Right ventricle myocardium inferior (tissue), 1 donor: ENCODE measurements at regions of chr5 and their contacts with region 1.

Region 1: DNA sequence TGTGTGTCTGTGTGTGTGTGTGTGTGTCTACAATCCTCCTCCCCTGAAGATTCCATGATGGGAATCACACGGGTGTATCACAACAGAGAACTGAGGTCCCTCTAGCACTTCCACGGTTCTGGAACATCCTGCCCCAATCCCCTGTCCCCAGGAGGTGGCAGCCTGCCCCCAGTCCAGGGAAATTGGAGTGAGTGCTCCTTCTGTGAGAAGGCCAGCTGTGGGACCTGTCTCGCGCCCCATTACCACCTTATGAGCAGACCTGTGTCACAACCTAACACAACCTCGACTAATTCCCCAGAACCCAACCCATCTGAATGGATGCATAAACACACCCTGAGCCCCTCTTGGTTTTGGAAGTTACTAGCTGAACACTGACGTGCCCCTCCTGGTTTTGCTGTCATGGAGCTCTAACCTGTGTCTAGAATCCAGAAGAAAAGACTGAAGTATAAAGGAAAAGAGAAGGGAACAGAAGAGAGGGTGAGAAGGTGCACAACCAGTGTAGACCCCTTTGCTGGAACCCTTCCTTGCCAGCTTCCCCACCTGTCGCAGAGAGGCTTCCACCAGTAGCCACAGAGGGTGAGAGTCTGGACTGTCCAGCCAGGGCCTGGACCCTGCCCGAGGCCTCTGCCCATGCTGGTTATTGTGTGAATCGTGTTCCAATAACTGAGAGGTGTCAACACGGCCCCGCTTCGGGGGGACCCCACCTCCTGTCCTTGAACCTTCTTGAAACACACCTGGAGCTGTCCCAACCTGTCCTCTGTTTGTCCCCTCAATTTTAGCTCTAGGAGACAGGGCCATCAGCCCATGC is 3.4 kb downstream of the BTNL9 start:
- DNase-seq: no peak
- ATAC-seq: no peak

Region 2: DNA sequence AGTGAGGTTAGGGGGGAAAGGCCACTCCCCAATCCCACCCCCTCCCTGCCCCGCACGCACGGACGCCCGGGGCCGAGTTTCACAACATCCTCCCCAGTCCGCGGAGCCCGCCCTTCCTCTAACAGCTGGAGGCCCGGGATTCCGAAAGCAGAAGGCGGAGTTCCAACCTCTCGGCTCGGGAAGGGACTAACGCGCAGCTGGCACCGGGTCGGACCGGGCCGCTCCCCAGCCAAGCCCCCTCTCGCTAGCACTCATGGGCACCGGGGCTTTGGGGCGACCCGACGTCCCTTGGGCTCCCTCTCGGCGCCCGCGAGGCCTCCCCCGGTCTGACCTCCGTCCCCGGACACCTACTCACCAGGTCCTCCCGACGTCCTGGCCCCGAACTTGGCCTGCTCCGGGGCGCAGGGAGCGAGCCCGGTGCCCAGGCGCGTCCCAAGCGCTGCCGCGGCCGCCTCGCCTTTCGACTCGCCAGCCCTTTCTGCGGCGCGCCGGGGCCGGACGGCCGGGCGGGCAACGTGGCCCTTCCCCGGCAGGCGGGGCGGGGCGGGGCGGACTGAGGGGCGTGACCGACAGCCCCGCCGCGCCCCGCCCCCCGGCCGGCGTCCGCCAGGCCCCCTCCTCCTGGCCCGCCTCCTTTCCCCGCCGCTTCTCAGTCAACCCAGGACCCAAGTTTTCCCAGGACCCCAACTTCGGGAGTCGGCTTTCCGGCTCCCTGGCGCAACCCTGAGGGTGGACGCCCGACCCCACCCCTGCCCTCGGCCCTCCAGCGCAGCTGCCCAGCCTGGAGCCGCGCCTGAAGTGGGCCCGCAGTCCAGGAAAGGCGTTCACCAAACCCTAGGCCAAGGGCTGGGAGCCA is 240.9 kb before region 1 on chr5 and contains the start of gene MGAT1:
- intact Hi-C with region 1: loop called (anchors 5 kb)
- DNase-seq: peak; percentile 95
- ATAC-seq: peak; percentile 89
- total RNA-seq, gene MGAT1: 76.0 TPM

Region 3: DNA sequence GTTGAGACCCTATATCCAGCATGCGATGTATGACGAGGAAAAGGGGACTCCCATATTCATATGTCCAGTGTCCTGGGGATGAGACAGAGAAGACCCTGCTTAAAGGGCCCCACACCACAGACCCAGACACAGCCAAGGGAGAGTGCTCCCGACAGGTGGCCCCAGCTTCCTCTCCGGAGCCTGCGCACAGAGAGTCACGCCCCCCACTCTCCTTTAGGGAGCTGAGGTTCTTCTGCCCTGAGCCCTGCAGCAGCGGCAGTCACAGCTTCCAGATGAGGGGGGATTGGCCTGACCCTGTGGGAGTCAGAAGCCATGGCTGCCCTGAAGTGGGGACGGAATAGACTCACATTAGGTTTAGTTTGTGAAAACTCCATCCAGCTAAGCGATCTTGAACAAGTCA is 37.7 kb before region 1 on chr5:
- intact Hi-C with region 1: no loop called
- DNase-seq: no peak
- ATAC-seq: no peak